Sciatic nerve (tissue), 2 donors: ENCODE measurements at regions of chr15 and their contacts with region 1.

Region 1: GRCh38 chr15:97072545-97072944 is 742.0 kb downstream of the NR2F2 start:
- DNase-seq: no peak
- ATAC-seq: no peak

Region 2: GRCh38 chr15:96187341-96188305 is 884.9 kb before region 1 on chr15:
- intact Hi-C with region 1: loop called (anchors 5 kb)
- DNase-seq: no peak
- ATAC-seq: peak; percentile 31

Region 3: DNA sequence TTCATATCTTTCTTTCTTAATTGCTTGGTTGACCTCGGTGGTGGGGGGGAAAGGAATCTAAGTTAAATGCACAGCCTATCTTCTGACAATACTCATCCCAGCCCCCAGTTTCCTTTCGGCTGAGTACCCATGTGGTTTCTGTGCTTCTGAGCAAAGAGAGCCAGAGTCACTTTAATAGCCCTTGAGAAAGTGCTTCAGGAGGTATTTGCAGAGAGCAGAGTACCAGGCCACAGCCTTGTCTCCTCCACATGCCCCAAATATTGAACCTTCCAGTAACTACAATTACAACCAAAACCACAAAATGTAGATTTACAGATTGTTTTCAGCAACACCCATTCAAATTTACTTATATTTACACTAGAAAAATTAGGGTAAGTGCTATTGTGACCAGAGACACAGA is 94.7 kb before region 1 on chr15:
- intact Hi-C with region 1: no loop called
- DNase-seq: no peak
- ATAC-seq: no peak